ENCODE measurements at regions of chr3 and their contacts with region 1.

Region 1: DNA sequence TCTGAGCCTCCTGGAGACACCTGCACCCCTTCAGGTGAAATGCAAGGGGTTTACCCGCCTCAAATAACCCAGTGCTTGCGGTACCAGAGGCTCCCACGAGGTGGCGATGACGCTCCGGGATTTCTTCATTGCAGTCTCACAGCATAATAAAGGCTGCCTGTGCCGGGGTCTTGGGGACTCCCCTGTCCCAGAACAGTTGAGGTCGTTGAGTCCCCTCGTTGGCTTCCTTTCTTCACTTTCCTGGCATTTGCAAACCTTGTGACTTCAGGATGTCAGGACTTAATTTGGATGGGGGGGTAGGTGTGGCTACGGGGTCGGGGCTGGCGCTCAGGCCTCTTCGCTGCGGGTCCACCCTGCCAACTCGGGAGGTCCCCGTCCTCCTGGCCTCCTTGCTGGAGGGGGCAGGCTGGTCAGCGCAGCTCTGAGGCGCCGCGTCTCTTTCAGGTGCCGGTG is 1.3 kb downstream of the GNAT1 start:
- DNase-seq: peak; percentile 93
- ATAC-seq: peak; percentile 78
- H3K4me3 Mint-ChIP-seq: no peak overlapping the region
- H3K27ac Mint-ChIP-seq: no peak overlapping the region
- H3K4me1 Mint-ChIP-seq: peaks cover 11% of the 10 kb centered on the region
- H3K27me3 Mint-ChIP-seq: peaks cover 15% of the 10 kb centered on the region
- CTCF ChIP-seq: peak; percentile 94

Region 2: DNA sequence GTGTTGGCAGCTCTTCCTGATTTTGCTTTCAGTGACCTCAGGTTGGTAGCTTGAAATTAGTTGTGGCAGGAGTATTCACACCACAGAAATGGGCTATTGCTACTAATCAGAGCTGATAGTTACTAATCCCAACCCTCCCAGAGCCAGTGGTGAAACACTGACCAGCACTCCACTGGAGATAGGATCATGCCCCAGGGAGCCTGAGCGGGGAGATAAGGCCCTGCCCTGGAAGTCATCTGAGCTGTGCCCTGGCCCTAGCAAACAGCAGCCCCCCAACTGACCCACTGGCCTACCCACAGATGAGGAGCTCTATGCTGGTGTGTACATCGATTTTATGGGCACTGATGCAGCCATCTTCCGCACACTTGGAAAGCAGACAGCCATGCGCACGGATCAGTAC is 10.7 kb before region 1 on chr3:
- CTCF ChIA-PET with region 1: interaction called, 10 read pairs
- POLR2A ChIA-PET with region 1: no interaction called
- intact Hi-C with region 1: no loop called
- DNase-seq: no peak
- ATAC-seq: no peak
- H3K4me3 Mint-ChIP-seq: no peak overlapping the region
- H3K27ac Mint-ChIP-seq: no peak overlapping the region
- H3K4me1 Mint-ChIP-seq: no peaks in the 10 kb centered on the region
- H3K27me3 Mint-ChIP-seq: no peaks in the 10 kb centered on the region
- CTCF ChIP-seq: no peak

Region 3: GRCh38 chr3:50211930-50212329 is 19.2 kb after region 1 on chr3:
- CTCF ChIA-PET with region 1: interaction called, 93 read pairs
- POLR2A ChIA-PET with region 1: no interaction called
- intact Hi-C with region 1: no loop called
- DNase-seq: peak; percentile 88
- ATAC-seq: peak; percentile 93
- H3K4me3 Mint-ChIP-seq: no peak overlapping the region
- H3K27ac Mint-ChIP-seq: no peak overlapping the region
- H3K4me1 Mint-ChIP-seq: peaks cover 4% of the 10 kb centered on the region
- H3K27me3 Mint-ChIP-seq: peaks cover 10% of the 10 kb centered on the region
- CTCF ChIP-seq: no peak

Region 4: DNA sequence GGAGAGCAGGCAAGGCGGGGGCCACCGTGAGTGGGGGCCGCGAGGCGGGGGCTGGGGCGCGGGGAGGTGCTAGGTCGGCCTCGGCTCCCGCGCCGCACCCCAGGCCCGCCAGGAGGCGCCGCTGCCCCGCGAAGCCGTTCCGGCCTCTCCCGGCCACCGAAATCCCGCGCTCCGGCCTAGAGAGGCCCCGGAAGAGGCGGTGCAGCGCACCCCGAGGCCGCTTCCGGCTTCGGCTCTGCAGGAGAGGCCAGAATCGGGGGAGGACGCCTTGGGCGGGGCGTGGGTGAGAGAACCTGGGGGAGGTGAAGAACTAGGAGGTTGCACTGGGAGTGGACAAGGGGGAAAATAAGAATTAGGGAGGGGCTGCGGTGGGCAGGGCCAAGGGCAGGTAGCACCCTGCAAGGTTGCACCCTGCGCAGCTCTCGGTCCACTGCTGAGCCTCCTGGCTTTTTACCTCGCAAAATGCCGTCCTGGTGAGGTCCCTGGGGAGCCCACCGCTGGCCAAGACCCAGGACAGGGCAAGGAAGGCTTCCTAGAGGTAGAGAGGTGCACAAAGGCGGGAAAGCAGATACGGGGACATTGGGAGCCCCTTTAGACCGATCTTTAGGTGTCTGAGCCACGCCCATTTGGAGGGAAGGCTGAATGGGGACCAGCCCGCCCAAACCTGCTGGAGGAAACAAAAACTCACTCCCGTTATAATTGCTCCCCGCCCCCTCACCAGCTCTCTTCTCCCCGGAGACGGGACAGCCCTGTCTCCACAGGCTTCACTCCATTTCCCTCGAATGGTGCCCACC is 34.9 kb after region 1 on chr3:
- CTCF ChIA-PET with region 1: interaction called, 204 read pairs
- POLR2A ChIA-PET with region 1: interaction called, 16 read pairs
- intact Hi-C with region 1: loop called (anchors 2 kb)
- DNase-seq: peak; percentile 91
- ATAC-seq: peak; percentile 84
- H3K4me3 Mint-ChIP-seq: peak overlapping the region; percentile 96
- H3K27ac Mint-ChIP-seq: peak overlapping the region; percentile 94
- H3K4me1 Mint-ChIP-seq: peaks cover 23% of the 10 kb centered on the region
- H3K27me3 Mint-ChIP-seq: peaks cover 4% of the 10 kb centered on the region
- CTCF ChIP-seq: peak; percentile 97

Region 5: GRCh38 chr3:50251220-50251619 is 58.5 kb after region 1 on chr3:
- CTCF ChIA-PET with region 1: interaction called, 28 read pairs
- POLR2A ChIA-PET with region 1: interaction called, 3 read pairs
- intact Hi-C with region 1: no loop called
- DNase-seq: peak; percentile 75
- ATAC-seq: peak; percentile 12
- H3K4me3 Mint-ChIP-seq: no peak overlapping the region
- H3K27ac Mint-ChIP-seq: peak overlapping the region; percentile 87
- H3K4me1 Mint-ChIP-seq: peaks cover 37% of the 10 kb centered on the region
- H3K27me3 Mint-ChIP-seq: no peaks in the 10 kb centered on the region
- CTCF ChIP-seq: no peak

Region 6: DNA sequence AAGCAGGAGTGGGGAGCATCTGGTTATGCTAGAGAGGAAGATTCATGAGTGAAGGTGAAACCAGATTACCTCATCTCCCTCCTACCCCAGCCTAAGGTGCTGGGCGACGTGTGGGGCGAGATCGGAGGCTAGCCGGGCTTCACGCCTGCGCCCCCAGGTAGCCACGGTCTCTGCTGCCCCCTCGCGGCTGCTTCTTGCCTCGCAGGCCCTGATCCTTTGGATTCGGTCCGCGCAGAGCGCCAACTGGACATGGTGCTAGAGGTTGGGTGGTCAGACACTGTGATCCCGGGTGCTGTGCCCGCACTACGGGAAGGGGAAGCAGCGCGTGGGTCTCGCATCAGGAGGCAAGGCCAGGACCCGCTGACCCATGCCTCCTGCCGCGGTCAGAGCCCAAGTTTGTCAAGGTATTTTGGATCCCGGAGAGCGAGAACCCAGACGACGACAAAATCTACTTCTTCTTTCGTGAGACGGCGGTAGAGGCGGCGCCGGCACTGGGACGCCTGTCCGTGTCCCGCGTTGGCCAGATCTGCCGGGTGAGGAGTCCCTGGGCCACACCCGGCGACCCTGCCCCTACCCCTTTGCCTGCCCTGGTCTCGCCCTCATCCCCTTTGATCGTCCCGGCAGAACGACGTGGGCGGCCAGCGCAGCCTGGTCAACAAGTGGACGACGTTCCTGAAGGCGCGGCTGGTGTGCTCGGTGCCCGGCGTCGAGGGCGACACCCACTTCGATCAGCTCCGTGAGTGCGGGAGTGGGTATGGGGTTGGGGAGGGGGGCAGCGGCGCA is 80.4 kb after region 1 on chr3:
- CTCF ChIA-PET with region 1: interaction called, 36 read pairs
- POLR2A ChIA-PET with region 1: interaction called, 3 read pairs
- intact Hi-C with region 1: loop called (anchors 2 kb)
- DNase-seq: peak; percentile 94
- ATAC-seq: peak; percentile 88
- H3K4me3 Mint-ChIP-seq: peak overlapping the region; percentile 74
- H3K27ac Mint-ChIP-seq: peak overlapping the region; percentile 26
- H3K4me1 Mint-ChIP-seq: peaks cover 33% of the 10 kb centered on the region
- H3K27me3 Mint-ChIP-seq: peaks cover 39% of the 10 kb centered on the region
- CTCF ChIP-seq: peak; percentile 96

Region 7: DNA sequence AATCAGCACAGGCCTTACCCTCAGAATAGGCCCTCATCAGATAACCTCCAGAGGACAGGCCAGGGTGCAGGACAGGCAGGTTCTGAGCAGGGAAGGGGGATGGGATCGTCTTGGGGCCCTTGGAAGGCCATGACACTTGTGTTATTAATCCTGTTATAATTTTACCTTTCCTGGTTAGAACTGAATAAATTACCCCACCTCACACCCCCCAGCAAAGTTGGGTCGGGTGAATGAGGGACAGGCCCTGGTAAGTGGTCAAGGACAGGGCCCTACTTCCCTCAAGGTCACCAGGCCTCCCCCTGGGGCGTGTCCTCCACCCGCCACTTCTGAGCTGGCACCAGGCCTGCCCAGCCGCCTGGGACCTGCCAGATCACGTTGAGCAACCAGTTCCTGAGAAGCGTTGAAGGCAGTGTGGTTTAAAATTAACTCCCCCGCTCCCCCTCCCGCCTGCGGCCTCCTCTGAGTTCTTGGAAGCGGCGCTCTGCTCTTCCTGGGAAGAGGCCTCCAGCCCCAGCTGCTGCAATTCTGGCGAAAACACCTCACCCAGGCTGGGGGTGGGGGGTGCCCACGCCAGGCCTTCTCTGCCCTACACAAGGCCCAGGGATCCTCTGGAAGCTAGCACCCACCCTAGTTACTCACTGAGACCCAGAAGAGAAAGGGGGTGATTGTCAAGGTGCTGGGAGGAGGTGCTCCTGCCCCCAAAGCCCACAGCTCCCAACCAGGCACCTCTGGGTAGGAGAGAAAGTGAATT is 408.3 kb after region 1 on chr3:
- CTCF ChIA-PET with region 1: no interaction called
- POLR2A ChIA-PET with region 1: no interaction called
- intact Hi-C with region 1: no loop called
- DNase-seq: peak; percentile 98
- ATAC-seq: peak; percentile 59
- H3K4me3 Mint-ChIP-seq: peak overlapping the region; percentile 94
- H3K27ac Mint-ChIP-seq: peak overlapping the region; percentile 100
- H3K4me1 Mint-ChIP-seq: peaks cover 78% of the 10 kb centered on the region
- H3K27me3 Mint-ChIP-seq: no peaks in the 10 kb centered on the region
- CTCF ChIP-seq: no peak